Heart right ventricle (tissue), 16 donors: ENCODE measurements at regions of chr17 and their contacts with region 1.

Region 1: DNA sequence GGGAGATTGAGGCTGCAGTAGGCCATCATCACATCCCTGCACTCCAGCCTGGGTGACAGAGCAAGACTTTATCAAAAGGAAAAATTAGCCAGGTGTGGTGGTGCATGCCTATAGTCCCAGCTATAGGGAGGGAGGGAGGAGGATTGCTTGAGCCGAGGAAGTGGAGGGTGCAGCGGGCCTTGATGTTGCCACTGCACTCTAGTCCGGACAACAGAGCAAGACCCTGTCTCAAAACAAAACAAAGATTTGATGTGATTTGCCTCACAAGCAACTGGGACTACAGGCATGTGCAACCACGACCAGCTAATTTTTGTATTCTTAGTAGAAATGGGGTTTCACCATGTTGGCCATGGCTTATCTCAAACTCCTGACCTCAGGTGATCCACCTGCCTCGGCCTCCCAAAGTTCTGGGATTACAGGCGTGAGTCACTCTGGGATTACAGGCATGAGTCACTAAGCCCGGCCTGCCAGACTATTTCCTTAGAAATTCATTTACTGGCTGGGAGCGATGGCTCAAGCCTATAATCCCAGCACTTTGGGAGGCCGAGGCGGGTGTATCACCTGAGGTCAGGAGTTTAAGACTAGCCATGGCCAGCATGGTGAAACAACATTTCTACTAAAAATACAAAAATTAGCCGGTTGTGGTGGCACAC is 11.5 kb downstream of the UBE2G1 start:
- DNase-seq: no peak
- ATAC-seq: no peak
- H3K4me3 ChIP-seq: no peak overlapping the region
- H3K27ac ChIP-seq: no peak overlapping the region
- H3K4me1 ChIP-seq: peaks cover 0 to 76% (median 50%) of the 10 kb centered on the region in 9 donors
- H3K27me3 ChIP-seq: no peaks in the 10 kb centered on the region
- CTCF ChIP-seq: no peak

Region 2: DNA sequence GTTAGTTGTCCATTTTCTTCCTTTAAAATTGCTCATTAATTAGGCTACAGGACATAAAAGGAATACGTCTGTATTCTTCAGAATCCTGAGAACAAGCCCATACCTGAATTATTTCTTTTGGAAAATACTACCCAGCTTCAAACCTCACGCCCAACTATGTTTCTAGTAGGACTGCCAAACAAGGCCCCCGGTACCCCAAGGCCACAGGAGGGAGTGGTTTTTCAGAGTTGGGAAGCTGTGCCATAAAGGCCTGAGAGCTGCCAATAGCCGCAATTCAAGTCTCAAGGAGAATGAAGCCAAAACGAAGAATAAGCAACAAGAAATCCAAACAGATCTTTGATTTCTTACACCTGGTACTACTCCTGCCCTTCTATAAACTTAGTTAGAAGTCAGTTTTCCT is 36.8 kb before region 1 on chr17:
- intact Hi-C with region 1: loop called in 4 of 10 experiments (anchors 5 to 10 kb)
- DNase-seq: no peak
- ATAC-seq: no peak
- H3K4me3 ChIP-seq: no peak overlapping the region
- H3K27ac ChIP-seq: peak overlapping the region in 5 of 10 donors; percentile 1 to 72 (median 45)
- H3K4me1 ChIP-seq: peaks cover 2 to 78% (median 54%) of the 10 kb centered on the region in 9 donors
- H3K27me3 ChIP-seq: no peaks in the 10 kb centered on the region
- CTCF ChIP-seq: peak in 1 of 9 donors; percentile 13

Region 3: DNA sequence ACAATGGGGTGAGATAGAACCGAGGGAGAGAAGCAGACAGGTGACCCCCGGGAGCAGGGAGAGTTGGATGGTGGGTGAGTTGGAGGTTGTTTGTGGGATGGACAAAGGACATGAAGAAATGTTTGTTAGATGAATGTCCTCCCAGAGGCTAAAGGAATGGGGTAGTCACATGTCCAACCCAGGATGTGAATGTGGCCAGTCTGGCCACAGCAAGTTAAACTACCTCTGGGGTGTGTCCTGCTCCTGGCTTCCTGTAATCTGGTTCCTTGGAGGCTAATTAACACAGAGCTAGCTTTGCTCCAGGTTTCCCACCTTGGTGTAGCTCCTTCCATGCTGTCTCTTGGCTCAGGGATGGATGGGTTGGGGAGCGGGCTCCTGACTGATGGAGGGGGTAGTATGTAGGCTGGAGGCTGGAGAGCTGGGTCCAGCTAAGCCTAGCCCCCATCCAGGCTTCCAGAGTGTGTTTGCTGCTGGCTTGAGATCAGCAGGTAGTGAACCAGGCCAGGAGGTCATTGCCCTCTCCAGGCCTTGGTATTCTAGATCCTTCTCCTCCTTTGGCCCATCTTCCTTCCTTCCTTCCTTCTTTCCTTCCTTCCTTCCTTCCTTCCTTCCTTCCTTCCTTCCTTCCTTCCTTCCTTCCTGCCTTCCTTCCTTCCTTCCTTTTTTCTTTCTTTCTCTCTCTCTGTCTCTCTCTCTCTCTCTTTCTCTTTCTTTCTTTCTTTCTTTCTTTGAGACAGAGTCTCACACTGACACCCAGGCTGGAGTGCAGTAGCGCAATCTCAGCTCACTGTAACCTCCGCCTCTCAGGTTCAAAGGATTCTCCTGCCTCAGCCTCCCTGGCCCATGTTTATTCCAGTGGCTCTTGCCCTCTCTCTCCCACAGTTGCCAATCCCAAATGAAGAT is 39.5 kb after region 1 on chr17:
- intact Hi-C with region 1: no loop called
- DNase-seq: no peak
- ATAC-seq: no peak
- H3K4me3 ChIP-seq: no peak overlapping the region
- H3K27ac ChIP-seq: no peak overlapping the region
- H3K4me1 ChIP-seq: no peaks in the 10 kb centered on the region
- H3K27me3 ChIP-seq: no peaks in the 10 kb centered on the region
- CTCF ChIP-seq: no peak